Mammary epithelial cell (primary cell): ENCODE measurements at regions of chr7 and their contacts with region 1.

Region 1: DNA sequence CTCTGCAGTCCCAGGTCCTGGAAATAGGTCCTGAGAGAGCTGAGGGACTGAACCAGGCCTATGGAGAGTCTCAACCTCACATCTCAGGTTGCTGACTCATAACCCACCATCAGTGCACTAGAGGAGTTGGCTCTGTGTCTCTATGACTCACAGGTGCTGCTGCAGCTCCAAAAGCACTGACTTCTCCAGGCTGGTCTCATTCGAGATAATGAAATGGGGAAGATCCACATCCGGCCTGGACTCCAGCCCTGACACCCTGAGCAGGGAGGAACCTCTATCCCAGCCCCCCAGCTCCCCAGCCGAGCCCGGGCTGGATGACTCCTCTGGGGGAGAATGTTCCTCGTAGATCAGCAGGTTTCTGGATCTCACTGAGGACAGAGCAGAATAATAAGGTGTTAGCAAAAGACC is 35.5 kb upstream of the DGKI start:
- DNase-seq: peak; percentile 98
- H3K4me3 ChIP-seq: no peak overlapping the region
- H3K27ac ChIP-seq: peak overlapping the region; percentile 76
- H3K4me1 ChIP-seq: peaks cover 75% of the 10 kb centered on the region
- H3K27me3 ChIP-seq: no peaks in the 10 kb centered on the region
- CTCF ChIP-seq: no peak

Region 2: GRCh38 chr7:137667633-137668387 is 214.5 kb before region 1 on chr7:
- CTCF ChIA-PET with region 1: no interaction called
- dilution Hi-C with region 1: no loop called
- in situ Hi-C with region 1: loop called in 1 of 2 experiments (anchors 10 kb)
- intact Hi-C with region 1: no loop called
- DNase-seq: peak; percentile 85
- H3K4me3 ChIP-seq: no peak overlapping the region
- H3K27ac ChIP-seq: peak overlapping the region; percentile 50
- H3K4me1 ChIP-seq: peaks cover 35% of the 10 kb centered on the region
- H3K27me3 ChIP-seq: no peaks in the 10 kb centered on the region
- CTCF ChIP-seq: no peak

Region 3: DNA sequence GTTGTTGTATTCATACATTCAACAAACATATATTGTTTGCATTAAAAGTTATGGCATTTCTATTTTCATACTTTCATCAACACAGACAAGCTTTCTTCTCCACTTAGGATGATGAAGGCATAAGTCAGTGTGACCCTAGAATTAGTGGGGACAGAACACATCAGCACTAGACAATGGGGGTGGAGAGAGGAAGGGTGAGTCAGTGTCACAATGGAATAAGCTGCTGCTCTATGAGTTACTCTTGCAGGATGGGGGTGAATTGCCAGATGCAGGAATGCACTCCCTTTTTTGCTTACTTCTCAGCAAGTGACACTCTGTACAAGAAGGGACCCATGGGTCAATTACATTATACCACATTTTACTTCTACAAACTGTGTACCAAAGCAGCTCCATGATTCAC is 109.5 kb before region 1 on chr7:
- CTCF ChIA-PET with region 1: no interaction called
- dilution Hi-C with region 1: no loop called
- in situ Hi-C with region 1: no loop called
- intact Hi-C with region 1: loop called (anchors 5 kb)
- DNase-seq: peak; percentile 81
- H3K4me3 ChIP-seq: no peak overlapping the region
- H3K27ac ChIP-seq: no peak overlapping the region
- H3K4me1 ChIP-seq: peaks cover 34% of the 10 kb centered on the region
- H3K27me3 ChIP-seq: no peaks in the 10 kb centered on the region
- CTCF ChIP-seq: no peak

Region 4: DNA sequence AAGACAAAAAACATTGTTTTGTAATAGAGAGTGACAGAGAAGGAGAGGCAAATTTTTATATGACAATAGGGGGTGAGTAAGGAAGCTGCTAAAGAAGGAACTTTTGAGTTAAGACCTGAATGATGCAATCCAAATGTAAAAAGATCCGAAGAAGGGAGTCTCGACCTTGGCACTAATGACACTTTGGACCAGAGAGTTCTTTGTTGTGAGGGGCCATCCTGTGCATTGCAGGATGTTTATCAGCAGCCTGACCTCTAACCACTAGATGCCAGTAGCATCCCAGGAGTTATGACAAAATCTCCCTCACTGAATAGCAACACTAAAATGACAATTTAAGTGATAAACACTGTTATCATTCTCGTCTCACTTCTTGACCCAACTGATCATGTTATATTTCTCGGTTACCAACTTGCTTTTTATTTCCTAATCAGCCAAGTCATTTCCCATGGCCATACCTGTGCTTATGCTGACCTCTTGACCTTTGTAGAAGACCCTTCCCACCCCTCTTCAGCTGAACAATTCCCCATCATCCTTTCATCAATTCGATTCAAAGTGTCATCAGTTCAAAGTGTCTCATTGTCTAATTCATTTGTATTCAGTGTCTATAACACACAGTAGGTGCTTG is 65.5 kb before region 1 on chr7:
- CTCF ChIA-PET with region 1: no interaction called
- dilution Hi-C with region 1: no loop called
- in situ Hi-C with region 1: no loop called
- intact Hi-C with region 1: loop called (anchors 5 kb)
- DNase-seq: no peak
- H3K4me3 ChIP-seq: no peak overlapping the region
- H3K27ac ChIP-seq: no peak overlapping the region
- H3K4me1 ChIP-seq: no peaks in the 10 kb centered on the region
- H3K27me3 ChIP-seq: no peaks in the 10 kb centered on the region
- CTCF ChIP-seq: peak in 1 of 2 donors; percentile 58